CD8-positive, alpha-beta T cell (primary cell): ENCODE measurements at regions of chr10 and their contacts with region 1.

Region 1: GRCh38 chr10:48614481-48615390 is 9.9 kb upstream of the ARHGAP22 start:
- DNase-seq: no peak
- ATAC-seq: no peak
- H3K4me3 ChIP-seq: no peak overlapping the region
- H3K4me3 Mint-ChIP-seq: no peak overlapping the region
- H3K27ac ChIP-seq: no peak overlapping the region
- H3K27ac Mint-ChIP-seq: no peak overlapping the region
- H3K4me1 ChIP-seq: no peaks in the 10 kb centered on the region
- H3K4me1 Mint-ChIP-seq: no peaks in the 10 kb centered on the region
- H3K27me3 ChIP-seq: no peaks in the 10 kb centered on the region
- H3K27me3 Mint-ChIP-seq: peaks cover 22% of the 10 kb centered on the region
- CTCF ChIP-seq: no peak

Region 2: GRCh38 chr10:48670978-48671913 is 56.5 kb after region 1 on chr10:
- CTCF ChIA-PET with region 1: no interaction called
- POLR2A ChIA-PET with region 1: no interaction called
- intact Hi-C with region 1: loop called in 1 of 2 experiments (anchors 5 kb)
- DNase-seq: peak in 1 of 9 experiments; percentile 31
- ATAC-seq: peak; percentile 26
- H3K4me3 ChIP-seq: no peak overlapping the region
- H3K4me3 Mint-ChIP-seq: no peak overlapping the region
- H3K27ac ChIP-seq: no peak overlapping the region
- H3K27ac Mint-ChIP-seq: peak overlapping the region; percentile 4
- H3K4me1 ChIP-seq: no peaks in the 10 kb centered on the region
- H3K4me1 Mint-ChIP-seq: no peaks in the 10 kb centered on the region
- H3K27me3 ChIP-seq: no peaks in the 10 kb centered on the region
- H3K27me3 Mint-ChIP-seq: peaks cover 2% of the 10 kb centered on the region
- CTCF ChIP-seq: no peak